ENCODE measurements at regions of chr11 and their contacts with region 1.

Region 1: DNA sequence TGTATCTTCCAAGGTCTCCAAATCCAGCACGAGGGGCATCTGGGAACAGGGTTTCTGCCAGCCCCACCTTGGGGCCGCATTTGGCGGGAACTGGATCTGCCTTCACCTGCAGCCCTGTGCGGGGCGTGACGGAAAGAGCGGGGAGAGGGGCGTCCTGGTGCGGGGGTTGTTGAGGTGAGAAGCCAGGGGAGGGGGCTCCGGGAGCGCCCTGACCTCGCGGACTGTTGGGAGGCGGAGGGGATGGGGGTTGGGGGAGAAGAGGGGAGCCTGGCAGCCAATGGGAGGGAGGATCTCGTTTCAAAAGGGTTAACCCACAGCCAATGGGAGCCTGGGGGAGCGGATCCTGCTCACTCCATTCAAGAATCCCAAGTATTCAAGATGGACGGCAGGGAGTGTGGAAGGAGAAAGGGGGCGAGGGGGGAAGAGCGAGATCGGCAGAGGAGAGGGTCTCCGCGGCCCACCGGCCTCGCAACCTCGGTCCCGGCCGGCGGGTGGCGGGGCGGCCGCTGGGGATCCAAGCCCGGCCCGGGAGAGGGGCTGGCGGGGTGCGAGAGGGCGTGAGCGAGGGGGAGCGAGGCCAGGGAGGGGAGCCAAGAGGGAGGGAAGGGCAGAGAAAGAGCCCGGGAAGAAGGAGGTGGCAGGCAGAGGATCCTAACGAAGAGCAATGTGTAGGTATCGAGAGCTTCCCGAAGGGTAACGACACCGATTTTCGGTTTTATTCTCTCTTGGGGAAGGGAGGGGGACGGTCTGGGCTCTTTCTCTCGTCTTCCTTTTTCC is 11.5 kb downstream of the YPEL4 start:
- DNase-seq: peak; percentile 80
- H3K4me3 ChIP-seq: peak overlapping the region; percentile 55 to 87 (median 74)
- H3K27ac ChIP-seq: peak overlapping the region; percentile 81
- H3K4me1 ChIP-seq: peaks cover 24% of the 10 kb centered on the region
- H3K27me3 ChIP-seq: peaks cover 2 to 7% of the 10 kb centered on the region in 2 experiments
- CTCF ChIP-seq: no peak
- POLR2A ChIP-seq: peak; percentile 82

Region 2: GRCh38 chr11:57432714-57433163 is 205.5 kb before region 1 on chr11:
- CTCF ChIA-PET with region 1: no interaction called
- POLR2A ChIA-PET with region 1: no interaction called
- dilution Hi-C with region 1: no loop called
- intact Hi-C with region 1: no loop called
- DNase-seq: no peak
- H3K4me3 ChIP-seq: no peak overlapping the region
- H3K27ac ChIP-seq: no peak overlapping the region
- H3K4me1 ChIP-seq: no peaks in the 10 kb centered on the region
- H3K27me3 ChIP-seq: peaks cover 4 to 9% of the 10 kb centered on the region in 2 experiments
- CTCF ChIP-seq: no peak
- POLR2A ChIP-seq: no peak

Region 3: DNA sequence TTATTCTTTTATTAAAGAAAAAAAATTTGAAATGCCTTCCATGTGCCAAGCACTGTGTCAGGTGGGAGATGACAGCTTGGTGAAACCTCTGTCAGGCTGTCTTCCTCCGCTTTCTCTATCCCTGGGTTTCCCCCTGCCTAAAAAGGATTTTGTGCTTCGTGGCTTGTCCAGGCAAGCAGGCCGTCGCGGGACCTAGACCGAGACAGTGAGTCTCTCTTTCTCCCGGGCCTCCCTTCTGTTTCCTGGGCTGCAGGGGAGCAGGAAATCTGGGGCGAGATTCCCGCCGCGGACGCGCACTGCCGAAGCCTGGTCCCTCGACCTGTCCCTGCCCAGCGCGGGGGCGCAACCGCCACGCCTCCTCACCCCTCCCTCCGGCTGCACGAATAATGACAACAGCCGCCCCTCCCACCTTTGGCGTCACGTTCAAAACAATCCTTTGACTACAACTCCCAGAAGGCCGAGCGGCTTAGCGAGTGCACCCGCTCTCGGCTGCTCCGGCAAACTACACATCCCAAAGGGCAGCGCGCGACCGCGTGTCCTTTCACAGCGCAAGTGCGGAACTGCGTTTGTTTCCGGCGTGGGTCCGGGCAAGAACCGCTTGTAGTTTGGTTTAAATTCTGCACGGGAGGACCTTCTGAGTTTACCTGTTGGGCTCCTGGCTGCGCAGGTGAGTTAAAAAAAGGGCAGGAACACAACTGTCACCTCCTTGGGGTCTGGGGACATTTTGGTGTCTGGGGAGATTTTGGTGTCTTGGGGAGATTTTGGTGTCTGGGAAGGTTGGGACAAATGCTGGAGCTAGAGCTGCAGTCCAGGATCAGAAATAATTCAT is 19.2 kb after region 1 on chr11 and contains the start of gene CLP1:
- CTCF ChIA-PET with region 1: interaction called, 9 read pairs
- POLR2A ChIA-PET with region 1: no interaction called
- dilution Hi-C with region 1: no loop called
- intact Hi-C with region 1: loop called (anchors 1 kb)
- DNase-seq: peak; percentile 99
- H3K4me3 ChIP-seq: peak within 1 kb of the TSS; percentile 59 to 98 (median 90)
- H3K27ac ChIP-seq: peak within 1 kb of the TSS; percentile 75
- H3K4me1 ChIP-seq: peaks cover 4% of the 10 kb centered on the region
- H3K27me3 ChIP-seq: no peaks in the 10 kb centered on the region
- CTCF ChIP-seq: no peak
- POLR2A ChIP-seq: peak; percentile 70
- total RNA-seq, gene CLP1: 17.9 and 20.9 TPM in 2 replicates